Naive thymus-derived CD4-positive, alpha-beta T cell (primary cell): ENCODE measurements at regions of chr9 and their contacts with region 1.

Region 1: DNA sequence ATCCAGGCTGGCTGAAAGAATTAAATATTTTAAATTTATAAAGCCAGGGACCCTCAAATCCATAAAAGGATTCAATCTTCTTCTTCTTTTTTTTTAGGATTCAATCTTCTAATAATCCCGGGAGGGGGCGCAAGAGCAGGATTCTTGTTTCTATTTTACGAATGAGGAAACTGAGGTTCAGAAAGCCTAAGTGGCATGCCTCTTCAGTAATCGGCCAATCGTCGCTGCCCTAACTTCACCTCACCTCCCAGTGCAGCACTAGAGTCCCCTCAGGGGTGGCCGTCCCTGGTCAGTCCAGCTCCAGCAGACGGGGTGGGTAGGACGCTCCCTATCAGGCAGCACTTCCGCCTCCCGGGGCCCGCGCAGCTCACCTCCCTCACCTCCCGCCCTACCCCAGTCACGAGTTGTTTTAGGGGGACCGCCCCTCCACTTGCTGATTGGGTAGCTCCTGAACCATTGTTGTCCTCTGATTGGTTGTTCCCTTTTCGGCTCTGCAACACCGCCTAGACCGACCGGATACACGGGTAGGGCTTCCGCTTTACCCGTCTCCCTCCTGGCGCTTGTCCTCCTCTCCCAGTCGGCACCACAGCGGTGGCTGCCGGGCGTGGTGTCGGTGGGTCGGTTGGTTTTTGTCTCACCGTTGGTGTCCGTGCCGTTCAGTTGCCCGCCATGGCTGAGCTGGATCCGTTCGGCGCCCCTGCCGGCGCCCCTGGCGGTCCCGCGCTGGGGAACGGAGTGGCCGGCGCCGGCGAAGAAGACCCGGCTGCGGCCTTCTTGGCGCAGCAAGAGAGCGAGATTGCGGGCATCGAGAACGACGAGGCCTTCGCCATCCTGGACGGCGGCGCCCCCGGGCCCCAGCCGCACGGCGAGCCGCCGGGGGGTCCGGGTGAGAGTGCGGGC is at the start of gene CLTA:
- DNase-seq: peak; percentile 75 to 97 (median 96)
- ATAC-seq: peak; percentile 99
- H3K4me3 ChIP-seq: peak within 1 kb of the TSS; percentile 98
- H3K4me3 Mint-ChIP-seq: peak within 1 kb of the TSS; percentile 86 to 98 (median 95)
- H3K27ac ChIP-seq: peak within 1 kb of the TSS; percentile 91
- H3K27ac Mint-ChIP-seq: peak within 1 kb of the TSS; percentile 80 to 97 (median 94)
- H3K4me1 ChIP-seq: peaks cover 25 to 35% of the 10 kb centered on the region in 2 donors
- H3K4me1 Mint-ChIP-seq: peaks cover 43 to 58% (median 49%) of the 10 kb centered on the region in 7 donors
- H3K27me3 ChIP-seq: no peaks in the 10 kb centered on the region
- H3K27me3 Mint-ChIP-seq: no peaks in the 10 kb centered on the region
- total RNA-seq, gene CLTA: 32.2 to 140 (median 69.5) TPM

Region 2: DNA sequence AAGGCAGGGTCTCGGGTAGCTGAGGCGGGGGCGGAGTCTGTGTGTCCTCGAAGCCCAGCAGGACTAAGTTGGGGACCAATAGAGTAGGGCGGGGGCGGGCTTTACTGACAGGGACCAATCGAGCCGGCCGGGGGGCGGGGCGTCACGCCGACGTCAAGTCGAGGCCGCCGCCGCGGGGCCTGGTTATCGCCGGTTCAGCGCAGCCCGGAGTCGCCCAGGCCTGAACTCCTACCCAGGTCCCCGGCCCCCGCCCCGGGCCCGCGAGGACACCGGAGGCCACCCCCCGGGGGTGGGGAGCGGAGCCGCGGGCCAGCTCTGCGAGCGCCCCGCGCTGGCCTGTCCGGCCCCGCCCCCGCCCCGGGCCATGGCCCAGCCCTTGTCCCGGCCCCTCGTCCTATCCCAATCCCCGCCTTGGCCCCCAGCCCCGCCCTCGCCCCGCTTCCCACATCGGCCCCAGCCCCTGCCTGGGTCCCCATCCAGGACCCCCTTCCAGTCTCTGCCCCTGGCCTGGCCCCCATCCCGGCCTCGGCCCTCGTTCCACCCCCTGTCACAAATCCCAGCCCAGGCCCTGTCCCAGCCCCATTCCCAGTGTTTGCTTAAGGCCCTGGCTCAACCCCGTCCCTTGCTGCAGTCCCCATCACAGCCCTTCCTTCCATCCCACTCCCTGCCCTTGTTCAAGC is 361.4 kb before region 1 on chr9 and contains the start of gene TMEM8B:
- CTCF ChIA-PET with region 1: no interaction called
- POLR2A ChIA-PET with region 1: no interaction called
- intact Hi-C with region 1: loop called in 1 of 2 experiments (anchors 5 kb)
- DNase-seq: peak; percentile 80 to 95 (median 88)
- ATAC-seq: peak; percentile 95
- H3K4me3 ChIP-seq: peak within 1 kb of the TSS; percentile 88
- H3K4me3 Mint-ChIP-seq: peak within 1 kb of the TSS; percentile 84 to 100 (median 94)
- H3K27ac ChIP-seq: peak within 1 kb of the TSS; percentile 94
- H3K27ac Mint-ChIP-seq: peak within 1 kb of the TSS; percentile 91 to 99 (median 94)
- H3K4me1 ChIP-seq: peaks cover 4 to 14% of the 10 kb centered on the region in 2 donors
- H3K4me1 Mint-ChIP-seq: peaks cover 25 to 48% (median 43%) of the 10 kb centered on the region in 7 donors
- H3K27me3 ChIP-seq: no peaks in the 10 kb centered on the region
- H3K27me3 Mint-ChIP-seq: peaks cover 0 to 5% (median 0%) of the 10 kb centered on the region in 5 donors
- total RNA-seq, gene TMEM8B: 3.9 to 11.6 (median 10.6) TPM

Region 3: DNA sequence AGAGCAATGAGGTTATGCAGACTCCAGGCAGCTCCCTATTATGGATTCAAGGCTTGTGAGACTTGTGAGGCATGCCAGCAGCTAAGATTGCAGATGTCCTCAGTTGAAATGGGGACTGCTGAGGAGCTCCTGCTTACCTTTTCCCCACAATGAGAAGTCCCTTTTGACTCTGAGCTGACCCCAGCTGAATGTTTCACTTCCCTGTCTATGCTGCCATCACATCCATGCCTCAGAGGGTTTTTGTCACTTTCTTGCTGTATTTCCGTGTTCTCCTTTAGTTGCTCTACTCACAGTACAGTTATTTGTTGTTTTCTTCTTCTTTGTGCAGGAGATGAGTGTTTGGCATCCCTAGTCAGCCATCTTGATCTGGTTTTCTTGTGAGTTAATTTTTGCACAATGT is 213.9 kb before region 1 on chr9:
- CTCF ChIA-PET with region 1: no interaction called
- POLR2A ChIA-PET with region 1: no interaction called
- intact Hi-C with region 1: no loop called
- DNase-seq: no peak
- ATAC-seq: no peak
- H3K4me3 ChIP-seq: no peak overlapping the region
- H3K4me3 Mint-ChIP-seq: no peak overlapping the region
- H3K27ac ChIP-seq: no peak overlapping the region
- H3K27ac Mint-ChIP-seq: no peak overlapping the region
- H3K4me1 ChIP-seq: peaks cover 0 to 3% of the 10 kb centered on the region in 2 donors
- H3K4me1 Mint-ChIP-seq: peaks cover 3 to 21% (median 11%) of the 10 kb centered on the region in 7 donors
- H3K27me3 ChIP-seq: no peaks in the 10 kb centered on the region
- H3K27me3 Mint-ChIP-seq: peaks cover 41 to 81% (median 80%) of the 10 kb centered on the region in 5 donors

Region 4: GRCh38 chr9:36080519-36080918 is 110.1 kb before region 1 on chr9:
- CTCF ChIA-PET with region 1: no interaction called
- POLR2A ChIA-PET with region 1: no interaction called
- intact Hi-C with region 1: no loop called
- DNase-seq: no peak
- ATAC-seq: no peak
- H3K4me3 ChIP-seq: no peak overlapping the region
- H3K4me3 Mint-ChIP-seq: no peak overlapping the region
- H3K27ac ChIP-seq: no peak overlapping the region
- H3K27ac Mint-ChIP-seq: peak overlapping the region in 1 of 9 donors; percentile 65
- H3K4me1 ChIP-seq: no peaks in the 10 kb centered on the region
- H3K4me1 Mint-ChIP-seq: no peaks in the 10 kb centered on the region
- H3K27me3 ChIP-seq: no peaks in the 10 kb centered on the region
- H3K27me3 Mint-ChIP-seq: no peaks in the 10 kb centered on the region

Region 5: DNA sequence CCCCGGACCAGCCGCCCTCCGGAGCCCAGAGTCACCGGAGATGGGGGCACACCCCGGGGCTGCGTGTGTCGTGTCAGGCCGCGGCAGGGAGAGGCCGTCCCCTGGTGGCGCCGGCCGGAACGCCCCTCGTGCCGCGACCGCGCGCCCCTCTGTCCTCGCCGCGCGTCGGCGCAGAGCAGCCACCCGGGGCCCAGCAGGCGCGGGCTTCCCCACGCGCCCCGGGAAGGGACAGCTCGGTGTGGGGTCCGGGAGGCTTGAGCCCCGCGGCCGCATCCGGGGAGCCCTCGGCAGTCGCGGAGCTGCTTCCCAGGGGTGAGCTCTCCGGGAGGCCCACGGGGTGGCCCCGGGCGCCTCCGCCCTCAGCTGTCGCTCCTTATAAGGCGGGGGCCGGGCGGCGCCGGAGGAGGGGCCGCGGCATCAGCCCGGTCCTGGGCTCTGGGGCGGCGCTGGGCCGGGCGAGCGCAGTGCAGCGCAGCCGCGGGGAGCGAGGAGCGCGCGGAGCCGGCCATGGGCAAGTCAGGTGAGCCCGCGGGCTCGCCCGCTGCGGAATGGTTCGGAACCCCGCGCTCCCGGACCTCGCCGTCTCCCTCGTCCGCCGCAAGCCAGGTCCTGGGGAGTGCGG is 54.3 kb before region 1 on chr9 and contains the start of gene GLIPR2:
- CTCF ChIA-PET with region 1: interaction called, 6 read pairs
- POLR2A ChIA-PET with region 1: interaction called, 3 read pairs
- intact Hi-C with region 1: loop called (anchors 1 to 2 kb)
- DNase-seq: peak; percentile 60 to 88 (median 69)
- ATAC-seq: peak; percentile 97
- H3K4me3 ChIP-seq: peak within 1 kb of the TSS; percentile 78
- H3K4me3 Mint-ChIP-seq: peak within 1 kb of the TSS; percentile 83 to 99 (median 93)
- H3K27ac ChIP-seq: peak within 1 kb of the TSS; percentile 74
- H3K27ac Mint-ChIP-seq: peak within 1 kb of the TSS; percentile 25 to 94 (median 87)
- H3K4me1 ChIP-seq: peaks cover 43 to 49% of the 10 kb centered on the region in 2 donors
- H3K4me1 Mint-ChIP-seq: peaks cover 43 to 52% (median 49%) of the 10 kb centered on the region in 7 donors
- H3K27me3 ChIP-seq: no peaks in the 10 kb centered on the region
- H3K27me3 Mint-ChIP-seq: peaks cover 0 to 39% (median 0%) of the 10 kb centered on the region in 5 donors
- total RNA-seq, gene GLIPR2: 7.7 to 74.7 (median 18.6) TPM

Region 6: DNA sequence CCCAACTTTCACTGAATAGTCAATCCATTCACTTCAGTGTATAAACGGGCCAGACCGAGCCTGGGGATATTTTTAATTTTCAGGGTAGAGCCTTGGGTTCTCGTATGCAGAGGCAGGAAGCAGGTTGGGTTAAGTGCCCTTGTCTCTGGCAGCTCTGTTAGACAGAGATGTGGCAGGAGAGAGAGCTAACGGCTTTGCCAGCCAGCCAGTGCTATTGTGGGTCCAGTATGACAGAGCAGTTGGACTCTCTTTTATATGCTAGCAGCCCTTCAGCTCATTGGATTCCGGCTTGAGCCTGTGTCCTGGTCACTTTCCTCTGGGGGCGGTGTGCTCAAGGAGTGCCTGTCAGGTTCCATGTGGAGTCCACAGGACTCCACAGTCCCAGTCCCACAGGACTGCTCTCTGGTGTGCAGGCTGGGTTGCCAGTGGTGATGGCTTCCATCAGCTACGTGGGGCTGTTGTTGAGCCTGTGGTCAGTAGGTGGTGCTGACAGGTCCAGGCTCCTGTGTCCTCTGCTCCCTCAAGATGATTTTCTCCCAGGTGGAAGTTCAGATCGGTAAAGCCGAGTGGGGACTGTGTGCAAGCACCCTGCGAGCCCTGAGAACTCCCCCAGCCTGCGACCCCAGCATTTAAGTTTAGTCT is 14.4 kb after region 1 on chr9:
- CTCF ChIA-PET with region 1: interaction called, 6 read pairs
- POLR2A ChIA-PET with region 1: interaction called, 30 read pairs
- intact Hi-C with region 1: no loop called
- DNase-seq: no peak
- ATAC-seq: no peak
- H3K4me3 ChIP-seq: no peak overlapping the region
- H3K4me3 Mint-ChIP-seq: no peak overlapping the region
- H3K27ac ChIP-seq: no peak overlapping the region
- H3K27ac Mint-ChIP-seq: peak overlapping the region in 2 of 9 donors; percentile 10 to 58
- H3K4me1 ChIP-seq: peaks cover 7 to 8% of the 10 kb centered on the region in 2 donors
- H3K4me1 Mint-ChIP-seq: peaks cover 18 to 56% (median 41%) of the 10 kb centered on the region in 7 donors
- H3K27me3 ChIP-seq: no peaks in the 10 kb centered on the region
- H3K27me3 Mint-ChIP-seq: no peaks in the 10 kb centered on the region

Region 7: GRCh38 chr9:36258208-36258988 is 67.8 kb after region 1 on chr9 and contains the start of gene GNE:
- CTCF ChIA-PET with region 1: interaction called, 4 read pairs
- POLR2A ChIA-PET with region 1: interaction called, 8 read pairs
- intact Hi-C with region 1: loop called (anchors 1 kb)
- DNase-seq: peak; percentile 92 to 99 (median 96)
- ATAC-seq: peak; percentile 96
- H3K4me3 ChIP-seq: peak within 1 kb of the TSS; percentile 98
- H3K4me3 Mint-ChIP-seq: peak within 1 kb of the TSS; percentile 96 to 100 (median 98)
- H3K27ac ChIP-seq: peak within 1 kb of the TSS; percentile 93
- H3K27ac Mint-ChIP-seq: peak within 1 kb of the TSS; percentile 92 to 98 (median 96)
- H3K4me1 ChIP-seq: peaks cover 7 to 9% of the 10 kb centered on the region in 2 donors
- H3K4me1 Mint-ChIP-seq: peaks cover 0 to 14% (median 12%) of the 10 kb centered on the region in 7 donors
- H3K27me3 ChIP-seq: no peaks in the 10 kb centered on the region
- H3K27me3 Mint-ChIP-seq: peaks cover 0 to 2% (median 0%) of the 10 kb centered on the region in 5 donors
- total RNA-seq, gene GNE: 12.6 to 18.5 (median 16.0) TPM

Region 8: DNA sequence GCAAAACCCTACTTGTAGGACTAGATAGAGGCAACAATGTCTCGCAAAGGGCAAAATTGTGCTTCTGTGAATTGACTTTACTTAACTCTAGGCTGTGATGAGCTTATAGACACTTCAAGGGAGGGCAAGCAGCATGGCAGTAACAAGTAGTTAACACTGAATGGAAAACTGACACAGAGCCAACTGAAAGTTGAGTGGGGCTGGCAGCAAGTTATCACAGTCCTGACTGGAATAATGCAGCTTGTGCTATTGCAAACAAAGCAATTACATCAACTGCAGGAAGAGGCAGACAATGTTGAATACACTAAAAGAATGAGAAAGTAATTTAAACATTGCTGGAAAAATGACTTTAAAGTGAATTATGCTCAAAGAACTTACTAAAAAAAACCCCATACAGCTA is 147.2 kb after region 1 on chr9:
- CTCF ChIA-PET with region 1: no interaction called
- POLR2A ChIA-PET with region 1: no interaction called
- intact Hi-C with region 1: no loop called
- DNase-seq: no peak
- ATAC-seq: no peak
- H3K4me3 ChIP-seq: no peak overlapping the region
- H3K4me3 Mint-ChIP-seq: no peak overlapping the region
- H3K27ac ChIP-seq: no peak overlapping the region
- H3K27ac Mint-ChIP-seq: peak overlapping the region in 6 of 9 donors; percentile 16 to 78 (median 36)
- H3K4me1 ChIP-seq: no peaks in the 10 kb centered on the region
- H3K4me1 Mint-ChIP-seq: peaks cover 0 to 11% (median 0%) of the 10 kb centered on the region in 7 donors
- H3K27me3 ChIP-seq: no peaks in the 10 kb centered on the region
- H3K27me3 Mint-ChIP-seq: no peaks in the 10 kb centered on the region

Region 9: DNA sequence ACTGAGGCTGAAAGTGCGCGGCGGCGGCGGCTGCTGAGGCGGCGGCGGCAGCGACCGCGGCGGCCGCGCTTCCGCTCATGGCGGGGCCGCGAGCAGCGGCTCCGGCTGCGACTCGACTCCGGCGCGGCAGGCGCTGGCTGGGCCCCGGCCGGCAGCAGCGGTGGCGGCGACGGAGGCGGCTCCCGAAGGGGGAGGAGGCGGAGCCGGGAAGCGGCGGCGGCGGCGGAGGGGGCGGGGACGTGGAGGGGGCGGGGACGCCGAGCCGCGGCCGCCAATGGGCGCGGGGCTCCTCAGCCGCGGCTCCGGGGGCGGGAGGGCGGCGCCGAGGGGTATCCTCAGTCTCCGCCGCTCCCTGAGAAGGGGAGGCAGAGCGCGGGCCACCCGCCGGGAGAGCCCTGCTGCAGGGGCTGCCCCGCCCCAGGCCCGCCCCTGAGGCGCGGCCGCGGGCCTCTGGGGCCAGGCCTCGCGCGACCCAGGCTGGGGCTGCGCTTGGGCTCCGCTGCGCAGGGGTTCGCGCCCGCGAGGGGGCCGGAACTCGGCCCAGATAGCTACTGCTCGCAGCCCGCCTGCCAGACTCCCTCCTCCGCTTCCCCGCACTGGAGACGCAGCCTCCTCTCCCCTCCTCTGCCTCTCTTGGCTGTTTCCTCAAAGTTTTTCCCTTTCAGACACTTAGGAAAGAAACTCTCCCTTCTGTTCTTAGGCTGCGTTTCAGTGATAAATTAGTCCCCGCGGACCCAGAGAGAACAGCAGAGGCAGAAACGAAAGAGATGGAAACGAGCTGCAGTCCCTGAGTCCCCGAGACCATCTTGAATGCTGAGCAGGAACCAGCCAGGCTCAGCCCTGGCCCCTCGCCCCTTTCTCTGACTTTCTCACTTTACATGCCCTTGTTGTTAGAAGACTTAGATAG is 297.1 kb after region 1 on chr9:
- CTCF ChIA-PET with region 1: no interaction called
- POLR2A ChIA-PET with region 1: interaction called, 3 read pairs
- intact Hi-C with region 1: loop called in 1 of 2 experiments (anchors 2 kb)
- DNase-seq: peak; percentile 84 to 93 (median 89)
- ATAC-seq: peak; percentile 94
- H3K4me3 ChIP-seq: peak overlapping the region; percentile 77
- H3K4me3 Mint-ChIP-seq: peak overlapping the region; percentile 87 to 99 (median 96)
- H3K27ac ChIP-seq: peak overlapping the region; percentile 96
- H3K27ac Mint-ChIP-seq: peak overlapping the region; percentile 95 to 100 (median 98)
- H3K4me1 ChIP-seq: peaks cover 30 to 39% of the 10 kb centered on the region in 2 donors
- H3K4me1 Mint-ChIP-seq: peaks cover 33 to 77% (median 64%) of the 10 kb centered on the region in 7 donors
- H3K27me3 ChIP-seq: no peaks in the 10 kb centered on the region
- H3K27me3 Mint-ChIP-seq: no peaks in the 10 kb centered on the region

Region 10: GRCh38 chr9:37079370-37080164 is 888.9 kb after region 1 on chr9:
- CTCF ChIA-PET with region 1: no interaction called
- POLR2A ChIA-PET with region 1: no interaction called
- intact Hi-C with region 1: loop called in 1 of 2 experiments (anchors 1 kb)
- DNase-seq: peak; percentile 72 to 96 (median 94)
- ATAC-seq: peak; percentile 98
- H3K4me3 ChIP-seq: peak overlapping the region; percentile 67
- H3K4me3 Mint-ChIP-seq: peak overlapping the region; percentile 89 to 98 (median 95)
- H3K27ac ChIP-seq: peak overlapping the region; percentile 99
- H3K27ac Mint-ChIP-seq: peak overlapping the region; percentile 76 to 99 (median 97)
- H3K4me1 ChIP-seq: peaks cover 14 to 15% of the 10 kb centered on the region in 2 donors
- H3K4me1 Mint-ChIP-seq: peaks cover 33 to 56% (median 41%) of the 10 kb centered on the region in 7 donors
- H3K27me3 ChIP-seq: no peaks in the 10 kb centered on the region
- H3K27me3 Mint-ChIP-seq: peaks cover 0 to 10% (median 3%) of the 10 kb centered on the region in 5 donors